HEK293 (cell line): ENCODE measurements at regions of chr11 and their contacts with region 1.

Region 1: GRCh38 chr11:57456960-57457642 is 3.2 kb upstream of the RTN4RL2 start:
- H3K4me3 ChIP-seq: no peak overlapping the region
- H3K27ac ChIP-seq: no peak overlapping the region
- H3K4me1 ChIP-seq: no peaks in the 10 kb centered on the region
- CTCF ChIP-seq: peak; percentile 52

Region 2: DNA sequence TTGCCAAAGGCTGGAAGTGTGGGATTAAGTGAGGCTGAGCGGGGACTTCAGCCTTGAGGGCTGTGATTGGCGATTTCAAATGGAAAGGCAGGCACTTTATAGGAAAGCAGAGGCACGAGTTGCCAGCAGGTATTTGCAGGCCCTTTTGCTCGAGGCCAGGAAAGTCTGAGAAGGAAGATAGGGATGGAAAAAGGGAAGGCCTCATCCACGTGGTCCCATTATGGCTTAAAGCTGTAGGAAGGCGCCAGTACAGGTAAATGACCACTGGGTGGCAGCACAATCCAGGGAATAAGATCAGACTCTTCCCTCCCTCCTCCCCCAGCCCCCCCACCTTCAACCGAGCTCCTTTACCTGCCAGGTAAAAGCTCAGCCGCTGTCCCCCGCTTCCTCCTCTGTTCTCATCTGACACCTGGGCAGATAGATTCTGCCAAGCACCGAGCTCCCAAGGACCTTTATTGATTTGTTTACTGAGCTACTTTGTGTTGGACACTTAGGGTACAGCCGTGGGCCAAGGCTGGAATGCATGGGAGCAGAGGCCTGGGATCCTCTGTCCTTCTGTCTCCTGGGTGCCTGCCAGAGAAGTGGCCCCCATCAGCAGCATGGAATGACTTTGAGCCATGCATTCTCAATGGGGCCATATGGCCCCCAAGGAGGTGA is 111.4 kb before region 1 on chr11:
- CTCF ChIA-PET with region 1: interaction called, 16 read pairs
- POLR2A ChIA-PET with region 1: no interaction called
- H3K4me3 ChIP-seq: no peak overlapping the region
- H3K27ac ChIP-seq: no peak overlapping the region
- H3K4me1 ChIP-seq: no peaks in the 10 kb centered on the region
- CTCF ChIP-seq: 0 out of 2 replicates have a peak, but pooled peaks have one; percentile 26

Region 3: DNA sequence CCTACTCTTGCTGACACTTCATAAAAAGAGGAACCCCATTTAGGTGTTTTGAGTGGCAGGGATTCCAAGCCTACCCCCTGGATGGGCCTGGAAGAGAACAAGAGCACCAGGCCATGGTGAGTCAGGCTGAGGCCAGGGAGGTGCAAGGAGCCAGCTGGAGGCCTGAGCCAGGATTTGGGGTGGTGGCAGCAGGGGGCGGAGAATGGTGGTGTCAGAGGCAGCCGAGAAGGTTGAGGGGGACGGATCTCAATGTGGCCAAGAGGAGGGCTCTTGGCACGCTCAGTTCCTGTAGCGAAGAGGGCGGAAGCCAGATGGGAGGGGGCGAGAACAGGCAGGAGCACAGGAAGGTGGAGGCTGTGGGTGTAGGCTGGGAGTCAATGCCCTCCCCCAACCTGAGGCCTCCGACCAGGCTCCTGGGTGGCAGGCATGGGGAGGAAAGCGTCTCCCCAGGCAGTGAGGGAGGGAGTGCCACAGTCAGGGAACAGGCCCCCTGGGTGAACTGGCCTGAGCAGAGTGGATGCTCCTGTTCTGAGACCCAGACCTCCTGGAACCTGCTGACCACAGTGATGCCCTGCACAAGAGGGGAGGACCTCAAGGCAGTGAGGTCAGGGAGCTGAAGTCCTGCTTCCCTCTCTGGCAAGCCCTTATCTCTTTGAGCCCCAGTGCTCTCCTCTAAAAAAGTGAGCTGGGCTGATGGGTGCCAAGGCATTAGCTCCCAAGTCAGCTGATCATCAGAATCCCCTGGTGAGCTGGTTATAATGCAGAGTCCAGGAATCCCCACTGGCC is 17.1 kb after region 1 on chr11:
- CTCF ChIA-PET with region 1: interaction called, 140 read pairs
- POLR2A ChIA-PET with region 1: interaction called, 3 read pairs
- H3K4me3 ChIP-seq: no peak overlapping the region
- H3K27ac ChIP-seq: no peak overlapping the region
- H3K4me1 ChIP-seq: no peaks in the 10 kb centered on the region
- CTCF ChIP-seq: no peak

Region 4: GRCh38 chr11:57493507-57494503 is 36.7 kb after region 1 on chr11:
- CTCF ChIA-PET with region 1: interaction called, 44 read pairs
- POLR2A ChIA-PET with region 1: interaction called, 5 read pairs
- H3K4me3 ChIP-seq: no peak overlapping the region
- H3K27ac ChIP-seq: peak overlapping the region; percentile 21; the same call in 1 of the 2 replicates
- H3K4me1 ChIP-seq: no peaks in the 10 kb centered on the region
- CTCF ChIP-seq: 0 out of 2 replicates have a peak, but pooled peaks have one; percentile 18

Region 5: DNA sequence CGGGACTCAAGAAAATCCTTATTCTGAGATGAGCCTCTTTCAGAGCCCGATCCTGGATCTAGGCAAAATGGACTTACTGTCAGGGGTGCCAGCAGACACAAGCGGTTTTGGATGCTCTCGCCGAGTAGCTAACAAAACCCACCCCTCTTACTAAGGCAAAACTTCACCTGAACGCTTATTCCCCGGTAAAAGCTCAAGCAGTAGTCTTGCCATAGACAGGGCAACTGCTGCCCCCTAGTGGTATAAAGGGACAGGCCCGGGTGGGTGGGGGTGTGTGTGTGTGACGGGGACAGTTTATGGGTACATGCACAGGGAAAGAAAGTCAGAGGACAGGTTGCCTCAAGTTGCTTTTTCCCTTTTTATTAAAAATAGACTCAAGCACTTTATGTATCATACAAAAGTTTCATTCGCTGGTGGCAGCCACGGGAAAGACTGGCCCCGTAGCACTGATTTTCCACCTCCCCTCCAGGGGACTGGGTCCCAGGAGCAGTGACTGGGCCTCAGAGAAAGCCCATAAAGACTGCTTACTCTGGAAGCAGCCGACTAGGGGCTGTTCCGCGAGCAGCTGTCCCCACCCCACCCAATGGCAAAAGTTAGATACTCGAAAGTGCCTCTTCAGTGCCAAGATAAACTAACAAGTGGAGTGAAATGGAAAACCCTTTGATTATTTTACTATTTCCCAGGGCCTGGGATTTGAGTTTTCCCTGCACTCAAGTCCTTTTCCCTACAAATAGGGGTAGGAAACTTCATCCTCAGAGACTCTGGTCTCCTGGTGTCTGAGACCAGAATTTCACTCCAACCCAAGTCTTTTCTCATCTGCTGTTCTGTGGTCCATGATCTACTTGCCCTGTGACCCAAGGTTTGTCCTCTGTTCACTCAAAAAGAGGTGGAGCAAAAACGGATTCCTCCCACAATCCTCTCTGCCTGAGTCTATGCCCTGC is 187.9 kb after region 1 on chr11:
- CTCF ChIA-PET with region 1: interaction called, 14 read pairs
- POLR2A ChIA-PET with region 1: interaction called, 3 read pairs
- H3K4me3 ChIP-seq: no peak overlapping the region
- H3K27ac ChIP-seq: no peak overlapping the region
- H3K4me1 ChIP-seq: 0 out of 2 replicates have a peak, but pooled peaks cover 6% of the 10 kb centered on the region
- CTCF ChIP-seq: peak; percentile 40; the same call in 1 of the 2 replicates